ENCODE measurements at regions of chr17 and their contacts with region 1.

Region 1: DNA sequence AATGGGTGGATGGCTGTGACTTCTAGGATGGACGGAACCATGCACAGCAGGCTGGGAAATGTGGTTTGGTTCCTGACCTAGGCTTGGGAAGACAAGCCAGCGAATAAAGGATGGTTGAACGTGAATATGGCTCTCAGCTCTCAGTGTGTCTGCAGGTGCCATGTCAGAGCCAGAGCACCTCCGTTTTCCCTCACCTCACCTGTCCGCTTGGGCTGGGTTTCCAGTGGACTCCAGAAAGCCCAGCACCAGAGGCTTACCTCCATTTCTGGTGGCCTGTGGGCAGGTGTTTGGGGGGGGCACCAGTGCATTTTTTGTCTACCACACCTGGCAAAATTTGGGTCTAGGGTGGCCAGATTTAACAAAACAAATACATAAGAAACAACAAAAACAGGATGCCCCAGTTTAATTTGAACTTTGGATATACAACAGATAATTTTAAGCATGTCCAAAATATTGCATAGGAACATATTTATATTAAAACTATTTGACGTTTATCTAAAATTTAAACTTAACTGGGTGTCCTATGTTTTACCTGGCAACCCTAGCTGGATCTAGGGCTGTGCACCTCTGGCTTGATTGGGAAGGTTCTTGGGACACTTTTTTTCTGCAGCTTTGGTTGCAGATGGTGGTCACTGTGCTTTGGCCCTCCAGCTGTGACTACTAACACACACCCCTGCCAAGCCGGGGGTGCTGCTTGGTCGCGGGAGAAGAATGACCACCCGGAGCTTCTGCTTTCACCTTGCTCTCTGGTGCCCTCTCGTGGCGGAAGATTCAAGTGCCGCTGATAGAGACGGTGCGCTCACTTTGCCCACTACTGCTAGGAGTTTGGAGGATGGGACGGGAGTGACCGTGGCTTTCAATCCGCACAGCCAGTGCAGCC is 6.3 kb downstream of the SPACA3 start:
- DNase-seq: peak; percentile 94
- H3K4me3 ChIP-seq: no peak overlapping the region
- H3K27ac ChIP-seq: no peak overlapping the region
- H3K4me1 ChIP-seq: no peaks in the 10 kb centered on the region
- H3K27me3 ChIP-seq: no peaks in the 10 kb centered on the region
- CTCF ChIP-seq: peak; percentile 77

Region 2: DNA sequence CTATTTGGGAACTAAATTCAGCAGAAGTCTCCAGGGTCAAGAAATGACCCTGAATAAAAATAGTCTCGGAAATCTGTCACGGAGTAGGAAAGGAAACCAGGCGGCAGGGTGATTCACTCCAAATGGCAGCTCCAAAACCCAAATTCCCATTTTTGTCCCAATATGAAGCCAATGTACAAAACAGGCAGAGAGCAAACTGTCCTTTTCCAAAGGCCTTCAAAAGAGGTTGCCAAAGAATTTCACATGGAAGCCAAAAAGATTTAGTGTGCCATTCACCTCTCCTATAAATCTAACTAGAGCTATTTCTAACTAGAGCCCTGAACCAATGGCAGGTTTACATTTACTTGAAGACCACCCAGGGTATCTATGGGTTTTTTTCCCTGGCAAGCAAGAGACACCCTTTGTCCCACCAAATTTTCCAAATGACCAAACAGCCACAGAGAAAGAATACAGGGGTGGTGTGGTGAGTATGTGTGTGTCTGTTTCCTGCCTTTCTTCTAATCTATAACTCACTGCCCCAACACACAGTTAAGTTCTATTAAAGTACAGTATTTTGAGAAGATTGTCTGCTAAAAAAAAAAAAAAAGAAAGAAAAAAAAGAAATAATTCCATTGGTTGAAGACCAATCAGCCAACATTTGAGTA is 127.8 kb before region 1 on chr17:
- intact Hi-C with region 1: no loop called
- DNase-seq: no peak
- H3K4me3 ChIP-seq: no peak overlapping the region
- H3K27ac ChIP-seq: peak overlapping the region; percentile 57
- H3K4me1 ChIP-seq: no peaks in the 10 kb centered on the region
- H3K27me3 ChIP-seq: no peaks in the 10 kb centered on the region
- CTCF ChIP-seq: no peak

Region 3: GRCh38 chr17:32936894-32937500 is 61.0 kb before region 1 on chr17:
- intact Hi-C with region 1: loop called (anchors 2 kb)
- DNase-seq: peak; percentile 78
- H3K4me3 ChIP-seq: no peak overlapping the region
- H3K27ac ChIP-seq: no peak overlapping the region
- H3K4me1 ChIP-seq: no peaks in the 10 kb centered on the region
- H3K27me3 ChIP-seq: no peaks in the 10 kb centered on the region
- CTCF ChIP-seq: peak; percentile 74